ENCODE measurements at regions of chr12 and their contacts with region 1.

Region 1: GRCh38 chr12:9244894-9245293 is 36.7 kb upstream of the PZP start:
- DNase-seq: peak in 1 of 2 donors; percentile 6
- ATAC-seq: peak in 1 of 8 donors; percentile 45
- H3K4me3 ChIP-seq: no peak overlapping the region
- H3K27ac ChIP-seq: peak overlapping the region in 2 of 10 donors; percentile 48 to 53
- H3K4me1 ChIP-seq: peaks cover 0 to 22% (median 0%) of the 10 kb centered on the region in 9 donors
- H3K27me3 ChIP-seq: no peaks in the 10 kb centered on the region
- CTCF ChIP-seq: no peak

Region 2: GRCh38 chr12:8734873-8735381 is 510.0 kb before region 1 on chr12:
- intact Hi-C with region 1: no loop called
- DNase-seq: no peak
- ATAC-seq: peak in 1 of 8 donors; percentile 32
- H3K4me3 ChIP-seq: no peak overlapping the region
- H3K27ac ChIP-seq: peak overlapping the region in 1 of 10 donors; percentile 17
- H3K4me1 ChIP-seq: peaks cover 0 to 24% (median 17%) of the 10 kb centered on the region in 9 donors
- H3K27me3 ChIP-seq: no peaks in the 10 kb centered on the region
- CTCF ChIP-seq: no peak

Region 3: GRCh38 chr12:9079883-9080675 is 164.8 kb before region 1 on chr12:
- intact Hi-C with region 1: loop called in 1 of 10 experiments (anchors 10 kb)
- DNase-seq: no peak
- ATAC-seq: no peak
- H3K4me3 ChIP-seq: no peak overlapping the region
- H3K27ac ChIP-seq: no peak overlapping the region
- H3K4me1 ChIP-seq: peaks cover 0 to 10% (median under 1%) of the 10 kb centered on the region in 9 donors
- H3K27me3 ChIP-seq: no peaks in the 10 kb centered on the region
- CTCF ChIP-seq: no peak

Region 4: DNA sequence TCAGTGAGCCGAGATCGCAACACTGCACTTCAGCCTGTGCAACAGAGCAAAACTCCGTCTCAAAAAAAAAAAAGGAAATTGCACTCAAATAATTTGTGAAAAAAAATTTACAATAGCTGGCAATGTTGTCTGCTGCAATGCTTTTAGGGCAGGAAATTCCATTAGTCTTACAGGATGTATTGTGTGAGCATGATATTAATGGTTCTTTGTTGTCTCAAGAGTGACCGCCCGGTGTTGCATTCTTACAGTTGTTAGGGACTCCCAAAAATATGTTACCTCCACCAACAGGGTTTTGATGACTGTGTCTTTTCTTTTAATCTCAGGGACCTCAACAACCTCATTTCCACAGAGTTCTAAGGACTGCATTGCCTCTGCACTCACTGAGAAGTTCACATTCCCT is 81.5 kb before region 1 on chr12:
- intact Hi-C with region 1: loop called in 2 of 10 experiments (anchors 5 kb)
- DNase-seq: peak in 1 of 2 donors; percentile 60
- ATAC-seq: peak; percentile 81 to 93 (median 88)
- H3K4me3 ChIP-seq: no peak overlapping the region
- H3K27ac ChIP-seq: peak overlapping the region in 9 of 10 donors; percentile 15 to 82 (median 72)
- H3K4me1 ChIP-seq: peaks cover 0 to 44% (median 11%) of the 10 kb centered on the region in 9 donors
- H3K27me3 ChIP-seq: no peaks in the 10 kb centered on the region
- CTCF ChIP-seq: no peak

Measured in heart right ventricle (tissue), 16 donors.